B cell (primary cell): ENCODE measurements at regions of chr13 and their contacts with region 1.

Region 1: GRCh38 chr13:50713523-50714248 is 129.8 kb downstream of the DLEU7 start:
- DNase-seq: peak; percentile 43
- ATAC-seq: peak; percentile 69
- H3K4me3 ChIP-seq: peak overlapping the region; percentile 1 to 40 (median 23)
- H3K4me3 Mint-ChIP-seq: peak overlapping the region; percentile 81
- H3K27ac ChIP-seq: no peak overlapping the region
- H3K27ac Mint-ChIP-seq: peak overlapping the region; percentile 69
- H3K4me1 ChIP-seq: peaks cover 23 to 35% of the 10 kb centered on the region in 2 donors
- H3K4me1 Mint-ChIP-seq: peaks cover 38% of the 10 kb centered on the region
- H3K27me3 ChIP-seq: no peaks in the 10 kb centered on the region
- H3K27me3 Mint-ChIP-seq: no peaks in the 10 kb centered on the region
- CTCF ChIP-seq: no peak

Region 2: DNA sequence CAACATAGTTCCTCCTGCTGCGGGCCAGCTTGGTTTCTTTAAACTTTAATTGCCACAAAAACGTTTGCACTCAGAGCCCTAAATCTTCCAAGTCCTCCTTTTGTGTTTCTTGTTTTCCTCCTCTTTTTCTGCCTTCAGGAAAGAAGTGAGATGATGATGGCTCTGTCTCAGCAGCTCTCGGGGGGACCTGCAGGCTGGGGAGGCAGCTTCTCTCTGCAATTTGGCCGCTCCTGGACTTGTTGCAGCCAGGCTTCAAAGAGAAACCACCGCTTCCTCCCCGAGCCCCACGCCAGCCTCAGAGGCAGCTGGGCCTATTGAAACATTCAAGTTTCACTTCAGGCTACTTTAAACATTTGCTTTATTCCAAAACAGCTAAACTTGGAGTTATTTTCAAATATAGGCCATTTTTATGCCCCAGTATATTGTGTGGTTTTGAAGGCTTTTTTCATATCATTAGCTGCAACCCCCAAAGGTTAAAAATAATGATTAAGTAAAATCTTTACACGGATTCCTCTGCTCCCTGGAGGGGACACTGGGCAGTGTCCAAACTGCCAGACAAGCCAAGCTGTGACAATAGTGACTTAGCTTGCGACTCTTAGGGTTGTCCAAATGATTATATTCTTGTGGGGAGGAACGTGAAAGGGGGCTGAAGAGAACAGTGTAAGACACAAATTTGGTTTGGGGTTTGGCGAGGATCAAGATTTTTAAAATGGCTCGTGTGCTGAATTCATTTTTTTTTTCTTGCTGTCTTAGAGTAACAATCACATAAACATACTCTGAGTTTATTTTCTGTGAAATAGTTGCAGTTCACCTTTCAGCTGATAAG is 201.0 kb before region 1 on chr13:
- CTCF ChIA-PET with region 1: no interaction called
- POLR2A ChIA-PET with region 1: no interaction called
- intact Hi-C with region 1: no loop called
- DNase-seq: peak; percentile 72
- ATAC-seq: peak; percentile 84
- H3K4me3 ChIP-seq: peak overlapping the region; percentile 25 to 71 (median 47)
- H3K4me3 Mint-ChIP-seq: no peak overlapping the region
- H3K27ac ChIP-seq: peak overlapping the region; percentile 76 to 92
- H3K27ac Mint-ChIP-seq: no peak overlapping the region
- H3K4me1 ChIP-seq: peaks cover 22 to 32% of the 10 kb centered on the region in 2 donors
- H3K4me1 Mint-ChIP-seq: no peaks in the 10 kb centered on the region
- H3K27me3 ChIP-seq: no peaks in the 10 kb centered on the region
- H3K27me3 Mint-ChIP-seq: no peaks in the 10 kb centered on the region
- CTCF ChIP-seq: no peak

Region 3: DNA sequence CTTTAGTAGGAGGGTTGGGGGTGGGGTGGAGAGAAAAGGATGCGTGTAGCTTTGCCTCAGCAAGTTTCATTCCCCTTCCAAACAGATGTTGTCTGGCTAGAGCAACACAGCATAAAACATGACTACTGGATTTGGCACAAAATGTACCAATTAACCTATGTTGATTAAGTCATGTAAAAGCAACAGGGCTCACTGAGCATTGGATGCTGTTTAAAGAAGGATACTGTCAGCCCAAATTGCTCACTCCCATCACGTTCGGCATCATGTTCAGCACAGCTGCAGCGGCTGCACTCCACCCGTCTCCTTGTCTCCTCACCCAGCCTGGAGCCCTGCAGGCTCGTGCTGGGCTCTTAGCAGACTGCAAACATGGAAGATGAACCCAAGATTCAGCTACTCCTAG is 52.3 kb after region 1 on chr13:
- CTCF ChIA-PET with region 1: no interaction called
- POLR2A ChIA-PET with region 1: no interaction called
- intact Hi-C with region 1: loop called (anchors 10 kb)
- DNase-seq: no peak
- ATAC-seq: no peak
- H3K4me3 ChIP-seq: no peak overlapping the region
- H3K4me3 Mint-ChIP-seq: no peak overlapping the region
- H3K27ac ChIP-seq: no peak overlapping the region
- H3K27ac Mint-ChIP-seq: no peak overlapping the region
- H3K4me1 ChIP-seq: peaks cover 40 to 44% of the 10 kb centered on the region in 2 donors
- H3K4me1 Mint-ChIP-seq: peaks cover 49% of the 10 kb centered on the region
- H3K27me3 ChIP-seq: no peaks in the 10 kb centered on the region
- H3K27me3 Mint-ChIP-seq: no peaks in the 10 kb centered on the region
- CTCF ChIP-seq: no peak